WTC11 (cell line): ENCODE measurements at regions of chr14 and their contacts with region 1.

Region 1: GRCh38 chr14:102437997-102438915 is 71.3 kb downstream of the ANKRD9 start:
- DNase-seq: peak; percentile 96
- ATAC-seq: peak; percentile 98
- H3K4me3 Mint-ChIP-seq: peak overlapping the region; percentile 57
- H3K27ac Mint-ChIP-seq: peak overlapping the region; percentile 87
- H3K4me1 Mint-ChIP-seq: peaks cover 6% of the 10 kb centered on the region
- H3K27me3 Mint-ChIP-seq: no peaks in the 10 kb centered on the region
- CTCF ChIP-seq: peak; percentile 64

Region 2: GRCh38 chr14:102220031-102220430 is 218.2 kb before region 1 on chr14:
- CTCF ChIA-PET with region 1: no interaction called
- POLR2A ChIA-PET with region 1: no interaction called
- DNase-seq: no peak
- ATAC-seq: no peak
- H3K4me3 Mint-ChIP-seq: no peak overlapping the region
- H3K27ac Mint-ChIP-seq: peak overlapping the region; percentile 49; the same call in 1 of the 2 replicates
- H3K4me1 Mint-ChIP-seq: peaks cover 28% of the 10 kb centered on the region
- H3K27me3 Mint-ChIP-seq: no peaks in the 10 kb centered on the region
- CTCF ChIP-seq: no peak

Region 3: GRCh38 chr14:102351026-102351425 is 87.2 kb before region 1 on chr14:
- CTCF ChIA-PET with region 1: no interaction called
- POLR2A ChIA-PET with region 1: no interaction called
- DNase-seq: no peak
- ATAC-seq: no peak
- H3K4me3 Mint-ChIP-seq: no peak overlapping the region
- H3K27ac Mint-ChIP-seq: no peak overlapping the region
- H3K4me1 Mint-ChIP-seq: no peaks in the 10 kb centered on the region
- H3K27me3 Mint-ChIP-seq: no peaks in the 10 kb centered on the region
- CTCF ChIP-seq: no peak

Region 4: DNA sequence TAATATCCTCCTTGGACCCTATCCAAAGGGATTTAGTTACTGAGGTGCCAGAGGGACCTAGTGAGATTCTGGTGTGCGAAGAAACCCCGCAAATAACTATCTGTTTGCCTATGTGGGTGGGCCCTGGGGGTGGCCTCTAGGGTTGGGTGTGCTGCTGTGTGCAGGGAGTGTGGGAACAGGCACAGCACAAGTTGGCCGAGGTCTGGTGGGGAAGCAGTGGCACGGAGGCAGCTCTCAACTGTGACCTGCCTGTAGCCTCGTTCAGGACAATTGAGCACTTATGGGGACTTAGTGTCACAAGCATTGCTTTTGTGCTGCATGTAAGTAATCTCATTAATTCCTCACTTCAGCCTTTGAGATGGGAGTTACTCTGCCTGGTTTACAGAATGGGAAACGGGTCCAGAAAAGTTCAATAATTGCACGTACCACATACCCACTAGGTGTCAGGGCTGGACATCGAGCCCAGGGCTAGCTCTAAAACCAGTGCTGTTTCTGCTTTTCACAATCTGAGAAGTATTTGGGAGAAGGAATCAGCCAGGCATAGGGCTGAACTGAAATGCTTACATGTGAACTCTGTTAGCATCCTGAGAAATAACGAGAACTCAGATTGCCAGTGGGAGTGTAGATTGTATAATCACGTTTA is 16.7 kb before region 1 on chr14:
- CTCF ChIA-PET with region 1: no interaction called
- POLR2A ChIA-PET with region 1: no interaction called
- DNase-seq: no peak
- ATAC-seq: no peak
- H3K4me3 Mint-ChIP-seq: no peak overlapping the region
- H3K27ac Mint-ChIP-seq: peak overlapping the region; percentile 30; the same call in 1 of the 2 replicates
- H3K4me1 Mint-ChIP-seq: no peaks in the 10 kb centered on the region; the same call in 1 of the 2 replicates
- H3K27me3 Mint-ChIP-seq: no peaks in the 10 kb centered on the region
- CTCF ChIP-seq: no peak

Region 5: DNA sequence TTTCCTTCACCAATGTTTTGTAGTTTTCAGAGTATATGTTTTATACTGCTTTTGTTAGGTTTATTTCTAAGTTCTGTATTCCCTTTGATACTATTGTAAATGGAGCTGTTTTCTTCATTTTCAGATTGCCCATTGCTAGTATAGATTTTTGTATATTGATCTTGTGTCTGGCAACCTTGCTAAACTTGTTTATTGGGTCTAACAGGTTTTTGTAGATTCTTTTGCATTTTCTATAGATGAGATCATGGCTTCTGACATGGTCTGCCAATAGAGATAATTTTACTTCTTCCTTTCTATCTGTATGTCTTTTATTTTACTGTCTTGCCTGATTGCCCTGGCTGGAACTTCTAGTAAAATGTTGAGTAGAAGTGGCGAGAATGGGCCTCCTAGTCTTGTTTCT is 31.0 kb after region 1 on chr14:
- CTCF ChIA-PET with region 1: no interaction called
- POLR2A ChIA-PET with region 1: no interaction called
- DNase-seq: no peak
- ATAC-seq: no peak
- H3K4me3 Mint-ChIP-seq: no peak overlapping the region
- H3K27ac Mint-ChIP-seq: no peak overlapping the region
- H3K4me1 Mint-ChIP-seq: no peaks in the 10 kb centered on the region
- H3K27me3 Mint-ChIP-seq: no peaks in the 10 kb centered on the region
- CTCF ChIP-seq: no peak

Region 6: GRCh38 chr14:102485696-102486488 is 47.6 kb after region 1 on chr14:
- CTCF ChIA-PET with region 1: interaction called, 10 read pairs
- POLR2A ChIA-PET with region 1: no interaction called
- DNase-seq: no peak
- ATAC-seq: no peak
- H3K4me3 Mint-ChIP-seq: no peak overlapping the region
- H3K27ac Mint-ChIP-seq: peak overlapping the region; percentile 44; the same call in 1 of the 2 replicates
- H3K4me1 Mint-ChIP-seq: no peaks in the 10 kb centered on the region
- H3K27me3 Mint-ChIP-seq: no peaks in the 10 kb centered on the region
- CTCF ChIP-seq: no peak

Region 7: DNA sequence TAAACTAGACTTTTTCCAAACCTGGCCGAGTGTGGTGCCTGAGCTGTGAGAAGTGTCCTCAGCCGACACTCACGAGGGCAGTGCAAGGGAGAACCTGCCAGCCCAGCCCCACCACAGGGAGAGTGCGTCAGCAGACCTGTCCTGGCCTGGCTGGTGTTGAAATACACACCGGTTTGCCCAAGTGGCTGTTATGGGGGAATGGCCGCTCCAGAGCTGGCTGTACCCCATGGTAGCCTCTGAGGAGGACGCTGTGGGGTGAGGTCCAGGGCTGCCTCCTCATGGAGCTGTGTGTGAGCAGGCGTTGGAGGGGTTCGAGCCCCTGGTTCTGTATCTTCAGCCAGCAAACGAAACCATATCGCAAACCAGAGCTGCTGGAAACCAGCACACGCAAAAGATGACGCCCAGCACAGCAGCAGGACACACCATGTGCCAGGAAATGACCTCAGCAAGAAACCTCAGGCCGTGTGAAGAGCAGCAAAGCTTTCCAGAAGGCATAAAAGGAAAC is 62.0 kb after region 1 on chr14:
- CTCF ChIA-PET with region 1: interaction called, 64 read pairs
- POLR2A ChIA-PET with region 1: no interaction called
- DNase-seq: no peak
- ATAC-seq: no peak
- H3K4me3 Mint-ChIP-seq: no peak overlapping the region
- H3K27ac Mint-ChIP-seq: peak overlapping the region; percentile 80
- H3K4me1 Mint-ChIP-seq: no peaks in the 10 kb centered on the region
- H3K27me3 Mint-ChIP-seq: no peaks in the 10 kb centered on the region
- CTCF ChIP-seq: no peak

Region 8: GRCh38 chr14:102509744-102510615 is 71.7 kb after region 1 on chr14 and contains the start of gene ANKRD9:
- CTCF ChIA-PET with region 1: interaction called, 14 read pairs
- POLR2A ChIA-PET with region 1: no interaction called
- DNase-seq: peak; percentile 96
- ATAC-seq: peak; percentile 65
- H3K4me3 Mint-ChIP-seq: peak within 1 kb of the TSS; percentile 88
- H3K27ac Mint-ChIP-seq: peak within 1 kb of the TSS; percentile 89
- H3K4me1 Mint-ChIP-seq: peaks cover 15% of the 10 kb centered on the region
- H3K27me3 Mint-ChIP-seq: peaks cover 2% of the 10 kb centered on the region; the same call in 1 of the 2 replicates
- CTCF ChIP-seq: no peak
- total RNA-seq, gene ANKRD9: 55.6 to 63.8 TPM (median 56.6 TPM) in 3 replicates

Region 9: GRCh38 chr14:102516531-102517415 is 78.5 kb after region 1 on chr14:
- CTCF ChIA-PET with region 1: interaction called, 11 read pairs
- POLR2A ChIA-PET with region 1: no interaction called
- DNase-seq: peak; percentile 76
- ATAC-seq: peak; percentile 80
- H3K4me3 Mint-ChIP-seq: peak overlapping the region; percentile 83
- H3K27ac Mint-ChIP-seq: no peak overlapping the region
- H3K4me1 Mint-ChIP-seq: peaks cover 4% of the 10 kb centered on the region; the same call in 1 of the 2 replicates
- H3K27me3 Mint-ChIP-seq: peaks cover 14% of the 10 kb centered on the region
- CTCF ChIP-seq: peak; percentile 99